Naive thymus-derived CD4-positive, alpha-beta T cell (primary cell): ENCODE measurements at regions of chr10 and their contacts with region 1.

Region 1: GRCh38 chr10:103584216-103585010 is 90.9 kb downstream of the NEURL1 start:
- DNase-seq: peak; percentile 46 to 69 (median 58)
- ATAC-seq: peak; percentile 86
- H3K4me3 ChIP-seq: peak overlapping the region; percentile 91
- H3K4me3 Mint-ChIP-seq: peak overlapping the region; percentile 84 to 98 (median 90)
- H3K27ac ChIP-seq: peak overlapping the region; percentile 65
- H3K27ac Mint-ChIP-seq: peak overlapping the region; percentile 84 to 98 (median 96)
- H3K4me1 ChIP-seq: peaks cover 6 to 10% of the 10 kb centered on the region in 2 donors
- H3K4me1 Mint-ChIP-seq: peaks cover 4 to 27% (median 18%) of the 10 kb centered on the region in 7 donors
- H3K27me3 ChIP-seq: no peaks in the 10 kb centered on the region
- H3K27me3 Mint-ChIP-seq: peaks cover 0 to 10% (median 0%) of the 10 kb centered on the region in 5 donors

Region 2: DNA sequence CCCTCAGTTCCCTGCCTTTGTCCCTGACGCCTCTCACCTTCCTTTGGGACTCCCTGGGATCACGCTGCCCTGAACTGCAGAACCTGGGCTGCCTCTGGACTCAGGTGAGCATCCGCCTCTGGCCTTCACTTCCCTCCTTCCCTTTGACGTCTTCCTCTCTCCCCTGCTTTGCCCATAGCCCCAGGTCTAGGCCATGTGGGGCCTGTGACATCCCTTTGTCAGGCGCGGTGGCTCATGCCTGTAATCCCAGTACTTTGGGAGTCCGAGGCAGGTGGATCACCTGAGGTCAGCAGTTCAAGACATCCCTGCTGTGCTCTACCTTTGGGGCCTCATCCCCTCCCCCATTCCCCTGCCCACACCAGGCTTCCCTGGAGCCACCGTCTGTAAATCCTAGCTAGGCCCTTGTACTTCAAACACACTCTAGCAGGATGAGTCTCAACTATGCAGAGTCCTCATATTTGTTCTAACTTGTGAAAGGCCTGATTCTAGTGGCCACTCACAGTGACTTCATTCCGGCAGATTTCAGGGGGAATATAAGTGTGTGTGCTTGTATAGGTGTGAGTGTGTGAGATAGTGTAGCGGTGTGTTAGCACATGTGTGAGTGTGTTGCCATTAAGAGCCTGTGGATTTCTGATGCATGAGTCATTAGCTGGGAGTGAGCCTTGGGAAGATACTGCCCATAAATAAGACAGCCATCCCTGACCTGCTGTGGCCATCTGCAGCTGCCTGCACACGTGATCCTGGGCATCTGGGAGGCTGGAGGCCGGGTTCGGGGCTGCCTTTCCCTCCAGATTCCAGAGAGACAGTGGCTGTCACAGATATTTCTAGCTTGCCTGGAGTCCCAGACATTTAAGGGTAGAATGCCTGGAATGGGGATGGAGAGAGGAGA is 92.7 kb before region 1 on chr10:
- CTCF ChIA-PET with region 1: no interaction called
- POLR2A ChIA-PET with region 1: no interaction called
- intact Hi-C with region 1: loop called in 1 of 2 experiments (anchors 1 kb)
- DNase-seq: no peak
- ATAC-seq: no peak
- H3K4me3 ChIP-seq: no peak overlapping the region
- H3K4me3 Mint-ChIP-seq: peak overlapping the region in 6 of 10 donors; percentile 18 to 86 (median 81)
- H3K27ac ChIP-seq: no peak overlapping the region
- H3K27ac Mint-ChIP-seq: no peak overlapping the region
- H3K4me1 ChIP-seq: peaks cover 0 to 12% of the 10 kb centered on the region in 2 donors
- H3K4me1 Mint-ChIP-seq: peaks cover 0 to 18% (median 15%) of the 10 kb centered on the region in 7 donors
- H3K27me3 ChIP-seq: no peaks in the 10 kb centered on the region
- H3K27me3 Mint-ChIP-seq: peaks cover 25 to 45% (median 34%) of the 10 kb centered on the region in 5 donors

Region 3: GRCh38 chr10:103610083-103610472 is 25.7 kb after region 1 on chr10:
- CTCF ChIA-PET with region 1: no interaction called
- POLR2A ChIA-PET with region 1: no interaction called
- intact Hi-C with region 1: no loop called
- DNase-seq: no peak
- ATAC-seq: no peak
- H3K4me3 ChIP-seq: no peak overlapping the region
- H3K4me3 Mint-ChIP-seq: no peak overlapping the region
- H3K27ac ChIP-seq: no peak overlapping the region
- H3K27ac Mint-ChIP-seq: no peak overlapping the region
- H3K4me1 ChIP-seq: no peaks in the 10 kb centered on the region
- H3K4me1 Mint-ChIP-seq: peaks cover 0 to 4% (median 0%) of the 10 kb centered on the region in 7 donors
- H3K27me3 ChIP-seq: no peaks in the 10 kb centered on the region
- H3K27me3 Mint-ChIP-seq: no peaks in the 10 kb centered on the region

Region 4: GRCh38 chr10:103659674-103660363 is 75.4 kb after region 1 on chr10:
- CTCF ChIA-PET with region 1: no interaction called
- POLR2A ChIA-PET with region 1: interaction called, 4 read pairs
- intact Hi-C with region 1: loop called in 1 of 2 experiments (anchors 2 kb)
- DNase-seq: peak in 8 of 9 donors; percentile 48 to 70 (median 62)
- ATAC-seq: peak; percentile 82
- H3K4me3 ChIP-seq: peak overlapping the region; percentile 96
- H3K4me3 Mint-ChIP-seq: peak overlapping the region; percentile 83 to 94 (median 89)
- H3K27ac ChIP-seq: peak overlapping the region; percentile 92
- H3K27ac Mint-ChIP-seq: peak overlapping the region; percentile 87 to 95 (median 91)
- H3K4me1 ChIP-seq: peaks cover 4 to 6% of the 10 kb centered on the region in 2 donors
- H3K4me1 Mint-ChIP-seq: peaks cover 6 to 21% (median 13%) of the 10 kb centered on the region in 7 donors
- H3K27me3 ChIP-seq: no peaks in the 10 kb centered on the region
- H3K27me3 Mint-ChIP-seq: no peaks in the 10 kb centered on the region